ENCODE measurements at regions of chr11 and their contacts with region 1.

Region 1: DNA sequence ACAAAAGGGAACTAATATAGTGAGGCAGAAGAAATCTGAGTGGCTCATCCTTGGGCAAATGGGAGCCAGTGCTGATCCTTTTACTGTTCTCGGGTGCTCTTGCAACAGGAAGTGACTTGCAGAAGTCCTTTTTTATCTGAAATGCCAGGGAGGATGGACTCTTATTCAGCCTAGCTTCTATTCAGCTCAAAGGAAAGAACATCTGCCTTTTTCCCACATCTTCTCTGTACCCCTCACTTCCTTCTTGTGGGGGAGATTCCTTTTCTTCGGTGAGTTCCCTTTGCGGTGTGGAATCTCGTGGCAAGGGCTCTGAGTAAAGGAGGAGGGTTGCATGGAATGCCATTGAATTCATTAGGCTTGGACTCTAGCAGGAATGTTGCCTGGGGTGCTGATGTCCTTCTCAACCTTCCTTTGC is 76.2 kb downstream of the ZBTB16 start:
- DNase-seq: no peak
- H3K4me3 ChIP-seq: no peak overlapping the region
- H3K27ac ChIP-seq: peak overlapping the region in 4 of 5 donors; percentile 55 to 99 (median 76)
- H3K4me1 ChIP-seq: peaks cover 82 to 100% (median 94%) of the 10 kb centered on the region in 4 donors
- H3K27me3 ChIP-seq: no peaks in the 10 kb centered on the region
- CTCF ChIP-seq: no peak
- EP300 ChIP-seq: no peak
- POLR2A ChIP-seq: no peak

Region 2: GRCh38 chr11:114080219-114080618 is 55.5 kb before region 1 on chr11:
- intact Hi-C with region 1: loop called (anchors 10 kb)
- DNase-seq: no peak
- H3K4me3 ChIP-seq: peak overlapping the region in 2 of 4 donors; percentile 9 to 35
- H3K27ac ChIP-seq: peak overlapping the region; percentile 42 to 81 (median 61)
- H3K4me1 ChIP-seq: peaks cover 94 to 100% (median 98%) of the 10 kb centered on the region in 4 donors
- H3K27me3 ChIP-seq: no peaks in the 10 kb centered on the region
- CTCF ChIP-seq: no peak
- EP300 ChIP-seq: no peak
- POLR2A ChIP-seq: no peak

Region 3: DNA sequence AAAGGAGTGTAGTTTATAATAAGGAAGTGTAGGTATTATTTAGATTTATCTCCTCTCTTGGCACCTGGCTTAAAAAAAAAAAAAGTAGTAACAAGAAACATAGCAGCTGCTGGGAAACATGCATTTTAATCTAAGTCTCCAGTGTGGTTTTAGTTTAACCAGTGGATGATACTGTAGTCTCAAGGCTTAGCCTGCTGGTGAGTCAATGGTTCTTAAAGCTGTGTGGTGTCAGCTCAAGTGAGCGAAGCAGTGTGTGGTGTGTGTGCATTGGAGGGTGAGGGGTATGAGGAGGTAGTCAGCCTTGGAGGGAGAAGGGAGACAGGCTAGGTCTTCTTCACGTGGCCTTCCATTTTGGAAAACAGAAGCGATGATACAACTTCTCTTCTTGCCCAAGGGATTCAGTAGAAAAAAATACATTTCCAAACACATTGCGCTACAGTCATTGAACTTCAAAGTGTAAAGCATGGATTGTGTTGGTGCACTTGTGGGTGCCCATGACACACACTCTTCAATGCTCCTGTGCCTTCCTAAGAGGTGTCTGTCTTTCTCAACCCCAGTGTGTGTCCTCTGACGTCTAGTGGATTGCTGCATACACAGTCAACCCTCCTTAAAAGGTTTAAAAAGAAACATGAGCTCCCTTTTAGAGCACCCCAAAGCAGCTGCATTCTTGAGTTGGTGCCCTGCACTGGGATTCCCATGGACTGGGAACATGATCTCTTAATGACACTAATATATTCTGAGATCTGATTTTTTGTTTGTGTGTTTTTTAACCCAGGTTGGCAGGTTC is 36.2 kb before region 1 on chr11:
- intact Hi-C with region 1: no loop called
- DNase-seq: no peak
- H3K4me3 ChIP-seq: peak overlapping the region in 1 of 4 donors; percentile 6
- H3K27ac ChIP-seq: peak overlapping the region in 2 of 5 donors; percentile 22 to 39
- H3K4me1 ChIP-seq: peaks cover 47 to 96% (median 74%) of the 10 kb centered on the region in 4 donors
- H3K27me3 ChIP-seq: no peaks in the 10 kb centered on the region
- CTCF ChIP-seq: no peak
- EP300 ChIP-seq: no peak
- POLR2A ChIP-seq: no peak